ENCODE measurements at regions of chr19 and their contacts with region 1.

Region 1: DNA sequence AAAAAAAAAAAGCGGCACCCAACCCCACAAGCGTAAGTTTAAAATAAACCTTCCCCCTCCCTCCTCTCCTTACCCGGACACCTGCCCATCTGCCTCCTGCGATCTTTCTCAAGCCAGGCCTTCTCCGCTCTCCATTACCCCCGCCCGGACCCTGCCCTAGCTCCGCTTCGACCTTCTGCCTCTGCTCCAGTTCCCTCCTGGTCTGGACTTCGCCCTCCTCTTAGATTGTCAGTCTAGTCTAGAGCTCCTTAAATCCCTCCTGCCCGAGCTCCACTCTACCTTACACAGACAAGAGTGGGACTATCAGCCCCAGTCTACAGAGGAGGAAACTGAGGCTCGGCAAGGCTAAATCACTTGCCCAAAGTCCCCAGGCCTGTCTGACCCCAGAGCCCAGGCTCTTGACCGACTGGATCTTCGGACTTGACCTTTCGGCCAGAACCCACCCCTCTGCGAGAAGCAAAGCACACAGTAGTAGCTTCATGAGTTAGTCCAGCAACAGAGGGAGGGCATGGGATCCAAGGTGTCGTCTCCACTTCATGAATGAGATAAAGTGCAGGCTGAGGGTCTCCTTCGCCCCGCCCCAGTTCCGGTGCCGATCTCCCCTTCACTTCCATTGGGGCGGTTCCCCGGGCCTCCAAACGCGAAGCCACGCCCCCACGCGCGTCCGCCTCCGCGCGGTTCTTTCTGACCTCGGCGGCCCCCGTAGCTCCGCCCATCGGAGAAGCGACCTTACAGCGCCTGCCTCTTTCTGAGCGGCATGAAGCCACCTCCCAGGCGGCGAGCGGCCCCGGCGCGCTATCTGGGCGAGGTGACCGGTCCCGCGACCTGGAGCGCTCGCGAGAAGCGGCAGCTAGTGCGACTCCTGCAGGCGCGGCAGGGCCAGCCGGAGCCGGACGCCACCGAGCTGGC is at the start of gene SNAPC2:
- DNase-seq: peak; percentile 95 to 98 (median 98)
- H3K4me3 ChIP-seq: peak within 1 kb of the TSS; percentile 59 to 86 (median 79)
- H3K27ac ChIP-seq: peak within 1 kb of the TSS in 1 of 2 experiments; percentile 71
- H3K4me1 ChIP-seq: peaks cover 0 to 51% (median 48%) of the 10 kb centered on the region in 4 experiments
- H3K27me3 ChIP-seq: peaks cover 0 to 48% (median 15%) of the 10 kb centered on the region in 5 experiments

Region 2: GRCh38 chr19:7908742-7909461 is 11.0 kb before region 1 on chr19:
- CTCF ChIA-PET with region 1: interaction called, 16 read pairs
- POLR2A ChIA-PET with region 1: interaction called, 3 read pairs
- DNase-seq: no peak
- H3K4me3 ChIP-seq: no peak overlapping the region
- H3K27ac ChIP-seq: no peak overlapping the region
- H3K4me1 ChIP-seq: peaks cover 0 to 14% (median 11%) of the 10 kb centered on the region in 4 experiments
- H3K27me3 ChIP-seq: no peaks in the 10 kb centered on the region

Measured in common myeloid progenitor, CD34-positive (primary cell).